K562 (cell line): ENCODE measurements at regions of chr20 and their contacts with region 1.

Region 1: GRCh38 chr20:46013826-46014516 is 5.3 kb downstream of the MMP9 start:
- DNase-seq: peak; percentile 77 to 86 (median 79)
- ATAC-seq: peak; percentile 90
- H3K4me3 ChIP-seq: peak overlapping the region; percentile 38
- H3K27ac ChIP-seq: no peak overlapping the region
- H3K4me1 ChIP-seq: peaks cover 0 to 37% of the 10 kb centered on the region in 2 experiments; a peak in 2 of 5 replicates
- H3K27me3 ChIP-seq: peaks cover 11 to 25% of the 10 kb centered on the region in 2 experiments; a peak in 4 of 5 replicates
- CTCF ChIP-seq: peak; percentile 73 to 92 (median 90)
- EP300 ChIP-seq: no peak
- POLR2A ChIP-seq: no peak
- RAD21 ChIP-seq: peak; percentile 40 to 66; a peak in 3 of 4 replicates

Region 2: GRCh38 chr20:45833030-45833882 is 180.7 kb before region 1 on chr20 and contains the start of gene SNX21:
- CTCF ChIA-PET with region 1: no interaction called
- POLR2A ChIA-PET with region 1: no interaction called
- in situ Hi-C with region 1: no loop called
- intact Hi-C with region 1: no loop called
- DNase-seq: peak in 2 of 4 experiments; percentile 57 to 61
- ATAC-seq: peak; percentile 75
- H3K4me3 ChIP-seq: peak within 1 kb of the TSS; percentile 43
- H3K27ac ChIP-seq: no peak within 1 kb of the TSS
- H3K4me1 ChIP-seq: peaks cover 32 to 34% of the 10 kb centered on the region in 2 experiments
- H3K27me3 ChIP-seq: no peaks in the 10 kb centered on the region
- CTCF ChIP-seq: no peak
- EP300 ChIP-seq: no peak
- POLR2A ChIP-seq: no peak
- RAD21 ChIP-seq: no peak
- polyA plus RNA-seq, gene SNX21: 0.10 to 0.42 TPM

Region 3: GRCh38 chr20:45971675-45972499 is 42.1 kb before region 1 on chr20 and contains the start of gene ZNF335:
- CTCF ChIA-PET with region 1: interaction called, 4 read pairs
- POLR2A ChIA-PET with region 1: interaction called, 3 read pairs
- in situ Hi-C with region 1: no loop called
- intact Hi-C with region 1: loop called (anchors 1 kb)
- DNase-seq: peak; percentile 98 to 99 (median 99)
- ATAC-seq: peak; percentile 82
- H3K4me3 ChIP-seq: peak within 1 kb of the TSS; percentile 82
- H3K27ac ChIP-seq: peak within 1 kb of the TSS; percentile 100
- H3K4me1 ChIP-seq: peaks cover 9 to 36% of the 10 kb centered on the region in 2 experiments; a peak in 4 of 5 replicates
- H3K27me3 ChIP-seq: no peaks in the 10 kb centered on the region
- CTCF ChIP-seq: peak in 1 of 3 experiments; percentile 26; a peak in 2 of 6 replicates
- EP300 ChIP-seq: peak; percentile 12; the same call in 1 of the 2 replicates
- POLR2A ChIP-seq: peak; percentile 71; the same call in 1 of the 2 replicates
- RAD21 ChIP-seq: no peak; a peak in 1 of 4 replicates
- polyA plus RNA-seq, gene ZNF335: 0.39 to 0.50 TPM

Region 4: GRCh38 chr20:45987108-45987780 is 26.7 kb before region 1 on chr20:
- CTCF ChIA-PET with region 1: interaction called, 7 read pairs
- POLR2A ChIA-PET with region 1: interaction called, 8 read pairs
- in situ Hi-C with region 1: no loop called
- intact Hi-C with region 1: loop called (anchors 2 kb)
- DNase-seq: peak; percentile 85 to 90 (median 87)
- ATAC-seq: peak; percentile 94
- H3K4me3 ChIP-seq: no peak overlapping the region
- H3K27ac ChIP-seq: no peak overlapping the region
- H3K4me1 ChIP-seq: peaks cover 20 to 23% of the 10 kb centered on the region in 2 experiments
- H3K27me3 ChIP-seq: no peaks in the 10 kb centered on the region
- CTCF ChIP-seq: peak; percentile 88 to 97 (median 91)
- EP300 ChIP-seq: no peak
- POLR2A ChIP-seq: no peak
- RAD21 ChIP-seq: peak; percentile 57 to 76